Ascending aorta (tissue), 2 donors: ENCODE measurements at regions of chr9 and their contacts with region 1.

Region 1: GRCh38 chr9:9942764-9943424 is 669.9 kb downstream of the PTPRD start:
- DNase-seq: peak in 1 of 2 donors; percentile 68
- H3K4me3 ChIP-seq: no peak overlapping the region
- H3K27ac ChIP-seq: no peak overlapping the region
- H3K4me1 ChIP-seq: no peaks in the 10 kb centered on the region
- H3K27me3 ChIP-seq: no peaks in the 10 kb centered on the region
- CTCF ChIP-seq: peak in 2 of 3 experiments; percentile 82 to 86

Region 2: GRCh38 chr9:9605681-9606080 is 337.2 kb before region 1 on chr9:
- intact Hi-C with region 1: loop called (anchors 2 kb)
- DNase-seq: no peak
- H3K4me3 ChIP-seq: no peak overlapping the region
- H3K27ac ChIP-seq: no peak overlapping the region
- H3K4me1 ChIP-seq: no peaks in the 10 kb centered on the region
- H3K27me3 ChIP-seq: no peaks in the 10 kb centered on the region
- CTCF ChIP-seq: no peak

Region 3: DNA sequence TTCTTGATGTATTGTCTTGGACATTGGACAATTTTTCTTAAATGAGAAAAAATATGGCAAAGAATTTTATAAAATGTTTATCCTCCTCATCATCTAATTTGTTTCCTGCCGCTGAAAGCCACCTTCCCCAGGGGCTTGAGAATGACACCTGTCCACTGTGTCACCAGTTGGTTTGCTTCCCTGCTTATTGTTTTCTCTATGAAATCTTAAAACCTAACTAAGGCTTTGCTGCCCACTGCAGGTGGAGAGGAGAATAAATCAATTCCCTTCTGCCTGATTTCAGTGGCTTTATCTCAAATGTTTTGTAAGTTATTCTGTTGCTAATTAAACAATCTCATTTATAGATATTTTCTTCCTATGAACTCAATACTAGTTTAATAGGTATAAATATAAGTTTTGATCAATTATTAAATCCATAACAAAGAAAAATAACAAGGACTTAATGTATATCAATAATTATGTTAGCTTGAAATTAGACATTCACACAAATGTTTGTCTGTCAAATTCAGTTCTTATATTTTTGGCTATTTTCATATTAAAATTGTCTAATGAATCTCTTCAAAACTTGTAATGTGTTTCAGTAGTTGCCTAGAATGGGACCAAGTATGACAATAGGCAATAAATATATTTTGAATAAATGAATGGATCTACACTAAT is 152.6 kb before region 1 on chr9:
- intact Hi-C with region 1: loop called (anchors 10 kb)
- DNase-seq: no peak
- H3K4me3 ChIP-seq: no peak overlapping the region
- H3K27ac ChIP-seq: no peak overlapping the region
- H3K4me1 ChIP-seq: no peaks in the 10 kb centered on the region
- H3K27me3 ChIP-seq: no peaks in the 10 kb centered on the region
- CTCF ChIP-seq: peak; percentile 55 to 84 (median 74)

Region 4: GRCh38 chr9:9961487-9961886 is 18.6 kb after region 1 on chr9:
- intact Hi-C with region 1: no loop called
- DNase-seq: no peak
- H3K4me3 ChIP-seq: no peak overlapping the region
- H3K27ac ChIP-seq: no peak overlapping the region
- H3K4me1 ChIP-seq: no peaks in the 10 kb centered on the region
- H3K27me3 ChIP-seq: no peaks in the 10 kb centered on the region
- CTCF ChIP-seq: no peak